ENCODE measurements at regions of chr22 and their contacts with region 1.

Region 1: GRCh38 chr22:38214256-38215056 is 12.7 kb downstream of the MAFF start:
- DNase-seq: peak; percentile 50
- H3K4me3 ChIP-seq: no peak overlapping the region
- H3K27ac ChIP-seq: no peak overlapping the region
- H3K4me1 ChIP-seq: peaks cover 27% of the 10 kb centered on the region
- H3K27me3 ChIP-seq: no peaks in the 10 kb centered on the region
- CTCF ChIP-seq: no peak
- POLR2A ChIP-seq: no peak

Region 2: GRCh38 chr22:37777122-37777687 is 437.3 kb before region 1 on chr22:
- CTCF ChIA-PET with region 1: no interaction called
- POLR2A ChIA-PET with region 1: no interaction called
- dilution Hi-C with region 1: no loop called
- intact Hi-C with region 1: no loop called
- DNase-seq: no peak
- H3K4me3 ChIP-seq: no peak overlapping the region
- H3K27ac ChIP-seq: no peak overlapping the region
- H3K4me1 ChIP-seq: peaks cover 10% of the 10 kb centered on the region
- H3K27me3 ChIP-seq: no peaks in the 10 kb centered on the region
- CTCF ChIP-seq: no peak
- POLR2A ChIP-seq: peak; percentile 52

Region 3: DNA sequence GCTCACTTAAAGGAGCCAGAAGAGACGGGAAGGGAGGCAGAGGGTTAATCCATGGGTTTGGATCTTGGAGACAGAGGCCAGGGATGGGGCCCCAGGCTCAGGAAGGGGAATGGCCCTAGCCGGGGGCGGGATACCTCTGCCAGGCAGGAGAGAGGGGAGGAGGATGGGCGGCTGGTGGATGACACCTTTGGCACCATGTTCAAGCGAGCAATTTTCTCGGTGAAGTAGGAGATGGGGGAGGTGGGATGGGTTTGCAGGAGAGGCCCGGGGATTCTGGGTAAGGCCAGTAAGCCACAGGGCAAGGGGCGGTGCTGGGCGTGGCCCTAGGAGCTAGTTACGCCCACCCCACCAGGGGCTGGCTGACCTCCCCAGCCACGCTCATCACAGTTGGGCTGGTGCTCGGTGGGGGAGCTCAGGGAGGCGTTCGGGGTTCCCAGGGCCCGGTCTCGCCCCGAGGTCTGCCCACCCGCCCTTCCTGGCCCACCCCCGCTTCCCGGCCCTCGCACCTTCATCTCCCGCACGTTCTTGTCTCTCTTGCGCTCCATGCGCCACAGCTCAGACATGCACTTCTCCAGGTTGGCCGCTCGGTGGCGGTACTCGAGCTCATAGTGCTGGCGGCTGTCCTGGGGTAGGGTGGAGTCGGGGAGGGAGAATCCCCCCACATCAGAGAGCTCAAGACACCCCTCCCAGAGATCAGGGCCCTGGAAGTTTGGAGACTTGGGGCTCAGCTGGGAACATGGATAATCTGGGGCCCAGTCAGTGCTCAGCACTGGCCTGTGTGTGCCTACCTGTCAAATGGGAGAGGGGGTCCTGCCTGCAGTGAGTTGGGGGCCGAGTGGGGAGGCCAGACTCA is 116.7 kb before region 1 on chr22:
- CTCF ChIA-PET with region 1: interaction called, 15 read pairs
- POLR2A ChIA-PET with region 1: no interaction called
- dilution Hi-C with region 1: no loop called
- intact Hi-C with region 1: no loop called
- DNase-seq: peak; percentile 12
- H3K4me3 ChIP-seq: no peak overlapping the region
- H3K27ac ChIP-seq: no peak overlapping the region
- H3K4me1 ChIP-seq: peaks cover 10% of the 10 kb centered on the region
- H3K27me3 ChIP-seq: peaks cover 0 to 3% of the 10 kb centered on the region in 2 experiments
- CTCF ChIP-seq: peak; percentile 36 to 60
- POLR2A ChIP-seq: no peak

Region 4: GRCh38 chr22:38124236-38124974 is 90.1 kb before region 1 on chr22:
- CTCF ChIA-PET with region 1: no interaction called
- POLR2A ChIA-PET with region 1: no interaction called
- dilution Hi-C with region 1: no loop called
- intact Hi-C with region 1: no loop called
- DNase-seq: no peak
- H3K4me3 ChIP-seq: no peak overlapping the region
- H3K27ac ChIP-seq: no peak overlapping the region
- H3K4me1 ChIP-seq: no peaks in the 10 kb centered on the region
- H3K27me3 ChIP-seq: no peaks in the 10 kb centered on the region
- CTCF ChIP-seq: no peak
- POLR2A ChIP-seq: no peak

Region 5: GRCh38 chr22:38136584-38136983 is 77.9 kb before region 1 on chr22:
- CTCF ChIA-PET with region 1: no interaction called
- POLR2A ChIA-PET with region 1: interaction called, 11 read pairs
- dilution Hi-C with region 1: no loop called
- intact Hi-C with region 1: no loop called
- DNase-seq: no peak
- H3K4me3 ChIP-seq: no peak overlapping the region
- H3K27ac ChIP-seq: no peak overlapping the region
- H3K4me1 ChIP-seq: peaks cover 7% of the 10 kb centered on the region
- H3K27me3 ChIP-seq: no peaks in the 10 kb centered on the region
- CTCF ChIP-seq: no peak
- POLR2A ChIP-seq: no peak

Region 6: GRCh38 chr22:38176170-38176741 is 38.2 kb before region 1 on chr22:
- CTCF ChIA-PET with region 1: no interaction called
- POLR2A ChIA-PET with region 1: interaction called, 4 read pairs
- dilution Hi-C with region 1: no loop called
- intact Hi-C with region 1: loop called (anchors 1 kb)
- DNase-seq: peak; percentile 99
- H3K4me3 ChIP-seq: no peak overlapping the region
- H3K27ac ChIP-seq: peak overlapping the region; percentile 99
- H3K4me1 ChIP-seq: peaks cover 69% of the 10 kb centered on the region
- H3K27me3 ChIP-seq: no peaks in the 10 kb centered on the region
- CTCF ChIP-seq: no peak
- POLR2A ChIP-seq: no peak

Region 7: DNA sequence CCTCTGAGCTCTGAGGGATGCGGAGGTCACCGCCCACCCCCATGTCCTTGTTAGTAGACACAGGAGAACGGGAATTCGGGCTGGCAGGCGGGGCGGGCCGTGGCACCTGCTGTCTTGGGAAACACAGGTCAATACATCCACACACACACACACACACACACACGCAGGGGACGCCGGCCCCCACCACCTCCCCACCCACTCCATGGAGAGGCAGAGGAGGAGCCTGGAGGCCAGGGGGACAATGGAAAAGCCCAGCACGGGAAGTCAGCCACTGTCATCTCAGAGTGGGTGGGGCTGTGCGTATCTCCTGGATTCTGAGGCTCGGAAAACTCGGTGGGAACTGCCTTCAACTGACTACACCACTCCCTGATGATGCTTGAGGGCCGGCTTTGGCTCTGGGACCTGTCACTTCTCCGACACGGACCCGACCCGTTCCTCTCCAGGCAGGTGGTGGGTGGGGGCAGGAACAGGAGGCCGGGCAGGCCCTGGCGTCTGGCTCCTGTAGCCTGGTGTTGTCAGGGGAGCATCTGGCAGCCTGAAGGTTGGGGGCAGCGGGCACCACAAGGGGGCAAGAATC is 76.8 kb after region 1 on chr22:
- CTCF ChIA-PET with region 1: no interaction called
- POLR2A ChIA-PET with region 1: no interaction called
- dilution Hi-C with region 1: no loop called
- intact Hi-C with region 1: no loop called
- DNase-seq: no peak
- H3K4me3 ChIP-seq: no peak overlapping the region
- H3K27ac ChIP-seq: no peak overlapping the region
- H3K4me1 ChIP-seq: no peaks in the 10 kb centered on the region
- H3K27me3 ChIP-seq: no peaks in the 10 kb centered on the region
- CTCF ChIP-seq: peak in 1 of 2 donors; percentile 5
- POLR2A ChIP-seq: no peak

Region 8: GRCh38 chr22:38305471-38306448 is 91.3 kb after region 1 on chr22:
- CTCF ChIA-PET with region 1: no interaction called
- POLR2A ChIA-PET with region 1: no interaction called
- dilution Hi-C with region 1: no loop called
- intact Hi-C with region 1: no loop called
- DNase-seq: peak; percentile 67
- H3K4me3 ChIP-seq: no peak overlapping the region
- H3K27ac ChIP-seq: peak overlapping the region; percentile 33
- H3K4me1 ChIP-seq: peaks cover 14% of the 10 kb centered on the region
- H3K27me3 ChIP-seq: no peaks in the 10 kb centered on the region
- CTCF ChIP-seq: peak in 1 of 2 donors; percentile 3
- POLR2A ChIP-seq: no peak